IMR-90 (cell line): ENCODE measurements at regions of chr5 and their contacts with region 1.

Region 1: GRCh38 chr5:584216-584615 is 27.9 kb upstream of the CEP72 start:
- DNase-seq: no peak
- ATAC-seq: no peak
- H3K4me3 ChIP-seq: no peak overlapping the region
- H3K27ac ChIP-seq: no peak overlapping the region
- H3K4me1 ChIP-seq: no peaks in the 10 kb centered on the region
- H3K27me3 ChIP-seq: peaks cover 38% of the 10 kb centered on the region
- CTCF ChIP-seq: no peak
- POLR2A ChIP-seq: no peak
- RAD21 ChIP-seq: no peak

Region 2: DNA sequence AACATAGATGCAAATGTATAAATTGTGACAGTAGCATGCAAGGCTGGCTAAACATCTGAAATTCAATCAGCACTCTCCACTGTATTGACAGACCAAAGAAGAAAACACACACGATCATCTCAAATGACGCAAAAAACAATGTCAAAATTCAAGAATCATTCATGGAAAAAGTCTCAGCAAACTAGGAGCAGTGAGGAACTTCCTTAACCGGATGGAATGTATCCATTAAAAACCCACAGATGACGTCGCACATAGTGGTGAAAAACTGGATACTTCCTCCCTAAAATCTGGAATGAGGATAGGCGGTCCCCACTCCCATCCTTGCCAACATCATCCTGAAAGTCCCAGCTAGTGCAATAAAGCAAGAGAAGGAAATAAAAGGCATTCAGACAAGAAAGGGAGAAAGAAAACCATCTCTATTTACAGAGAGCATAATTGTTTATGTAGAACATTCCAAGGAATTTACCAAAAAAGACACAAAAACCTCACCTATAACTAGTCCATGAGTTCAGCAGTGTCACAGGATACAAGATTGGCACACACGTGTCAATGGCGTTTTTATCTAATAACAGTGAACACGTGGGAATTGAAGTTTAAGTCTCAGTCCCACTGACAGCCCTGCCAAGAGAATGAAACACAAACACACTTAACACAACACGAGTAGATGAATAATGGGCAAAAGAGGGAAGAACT is 13.8 kb after region 1 on chr5:
- CTCF ChIA-PET with region 1: no interaction called
- POLR2A ChIA-PET with region 1: interaction called, 13 read pairs
- dilution Hi-C with region 1: no loop called
- in situ Hi-C with region 1: no loop called
- intact Hi-C with region 1: no loop called
- DNase-seq: no peak
- ATAC-seq: no peak
- H3K4me3 ChIP-seq: no peak overlapping the region
- H3K27ac ChIP-seq: no peak overlapping the region
- H3K4me1 ChIP-seq: no peaks in the 10 kb centered on the region
- H3K27me3 ChIP-seq: peaks cover 51% of the 10 kb centered on the region
- CTCF ChIP-seq: no peak
- POLR2A ChIP-seq: no peak
- RAD21 ChIP-seq: no peak